Upper lobe of right lung (tissue), 1 donor: ENCODE measurements at regions of chr22 and their contacts with region 1.

Region 1: GRCh38 chr22:36331306-36331911 is 56.4 kb downstream of the MYH9 start:
- DNase-seq: peak; percentile 85
- ATAC-seq: peak; percentile 72
- H3K4me3 ChIP-seq: peak overlapping the region; percentile 11
- H3K27ac ChIP-seq: peak overlapping the region; percentile 91
- H3K4me1 ChIP-seq: peaks cover 93% of the 10 kb centered on the region
- H3K27me3 ChIP-seq: no peaks in the 10 kb centered on the region
- CTCF ChIP-seq: no peak

Region 2: DNA sequence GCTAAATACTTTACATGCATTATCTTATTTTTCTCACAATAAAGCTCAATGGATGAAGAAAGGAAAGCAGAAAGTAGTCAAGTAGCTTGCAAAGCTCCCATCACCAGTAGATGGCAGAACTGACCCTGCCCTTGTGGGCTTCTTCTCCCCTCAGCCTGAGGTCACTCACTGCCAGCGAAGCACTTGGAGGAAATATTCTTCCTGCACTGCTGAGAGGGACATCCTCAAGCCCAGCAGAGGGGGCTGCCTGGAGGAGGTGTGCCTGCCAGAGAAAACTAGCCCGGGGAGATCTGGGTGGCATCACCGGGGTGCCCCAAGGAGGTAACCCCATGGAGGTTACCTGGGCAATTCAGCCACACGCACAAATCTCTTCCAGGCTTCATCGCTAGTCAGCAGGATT is 136.4 kb before region 1 on chr22:
- intact Hi-C with region 1: no loop called
- DNase-seq: no peak
- ATAC-seq: peak; percentile 86
- H3K4me3 ChIP-seq: no peak overlapping the region
- H3K27ac ChIP-seq: no peak overlapping the region
- H3K4me1 ChIP-seq: peaks cover 15% of the 10 kb centered on the region
- H3K27me3 ChIP-seq: no peaks in the 10 kb centered on the region
- CTCF ChIP-seq: peak; percentile 78

Region 3: GRCh38 chr22:36387752-36388518 is 56.5 kb after region 1 on chr22 and contains the start of gene MYH9:
- intact Hi-C with region 1: loop called (anchors 10 kb)
- DNase-seq: peak; percentile 100
- ATAC-seq: peak; percentile 94
- H3K4me3 ChIP-seq: peak within 1 kb of the TSS; percentile 96
- H3K27ac ChIP-seq: peak within 1 kb of the TSS; percentile 96
- H3K4me1 ChIP-seq: peaks cover 36% of the 10 kb centered on the region
- H3K27me3 ChIP-seq: no peaks in the 10 kb centered on the region
- CTCF ChIP-seq: no peak
- total RNA-seq, gene MYH9: 842 TPM

Region 4: GRCh38 chr22:36398621-36399469 is 67.4 kb after region 1 on chr22:
- intact Hi-C with region 1: no loop called
- DNase-seq: no peak
- ATAC-seq: no peak
- H3K4me3 ChIP-seq: no peak overlapping the region
- H3K27ac ChIP-seq: no peak overlapping the region
- H3K4me1 ChIP-seq: peaks cover 14% of the 10 kb centered on the region
- H3K27me3 ChIP-seq: no peaks in the 10 kb centered on the region
- CTCF ChIP-seq: no peak